Naive thymus-derived CD4-positive, alpha-beta T cell (primary cell): ENCODE measurements at regions of chr20 and their contacts with region 1.

Region 1: DNA sequence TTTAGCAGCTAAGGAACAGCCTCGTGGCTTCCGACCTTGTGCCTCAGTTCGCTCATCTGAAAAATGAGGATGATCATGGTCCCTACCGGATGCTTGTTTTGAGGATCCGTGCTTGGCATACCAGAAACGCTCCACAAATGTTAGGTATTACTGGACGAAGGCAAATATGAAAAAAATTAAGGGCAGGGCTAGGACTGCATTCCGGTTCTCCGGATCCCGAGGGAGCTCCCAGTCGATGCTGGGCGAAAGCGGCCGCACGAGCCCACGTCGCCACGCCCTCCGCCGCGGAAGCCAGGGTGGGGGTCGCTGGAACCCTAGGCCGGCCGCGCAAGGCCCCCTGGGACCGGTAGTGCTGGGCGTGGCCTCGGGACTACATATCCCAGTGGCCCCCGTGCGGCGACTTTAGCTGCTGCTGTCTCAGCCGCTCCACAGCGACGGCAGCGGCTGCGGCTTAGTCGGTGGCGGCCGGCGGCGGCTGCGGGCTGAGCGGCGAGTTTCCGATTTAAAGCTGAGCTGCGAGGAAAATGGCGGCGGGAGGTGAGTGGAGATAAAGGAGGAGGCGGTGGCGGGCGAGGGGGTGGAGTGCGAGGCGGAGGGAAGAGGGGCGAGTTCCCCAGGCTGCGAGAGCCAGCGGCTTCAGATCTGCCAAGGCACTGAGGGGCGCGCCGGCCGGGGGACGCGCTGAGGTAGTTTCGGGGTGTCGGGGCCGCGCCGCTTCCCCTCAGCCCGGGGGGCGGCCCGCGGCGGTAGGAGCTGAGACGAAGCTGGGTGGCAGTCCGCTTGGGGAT is at the start of gene NCOA3:
- DNase-seq: peak; percentile 74 to 94 (median 83)
- ATAC-seq: peak; percentile 95
- H3K4me3 ChIP-seq: peak within 1 kb of the TSS; percentile 86
- H3K4me3 Mint-ChIP-seq: peak within 1 kb of the TSS; percentile 80 to 99 (median 97)
- H3K27ac ChIP-seq: peak within 1 kb of the TSS; percentile 80
- H3K27ac Mint-ChIP-seq: peak within 1 kb of the TSS; percentile 80 to 98 (median 95)
- H3K4me1 ChIP-seq: peaks cover 19 to 28% of the 10 kb centered on the region in 2 donors
- H3K4me1 Mint-ChIP-seq: peaks cover 25 to 48% (median 43%) of the 10 kb centered on the region in 7 donors
- H3K27me3 ChIP-seq: no peaks in the 10 kb centered on the region
- H3K27me3 Mint-ChIP-seq: peaks cover 0 to 2% (median 0%) of the 10 kb centered on the region in 5 donors
- total RNA-seq, gene NCOA3: 75.0 to 115 (median 89.2) TPM

Region 2: DNA sequence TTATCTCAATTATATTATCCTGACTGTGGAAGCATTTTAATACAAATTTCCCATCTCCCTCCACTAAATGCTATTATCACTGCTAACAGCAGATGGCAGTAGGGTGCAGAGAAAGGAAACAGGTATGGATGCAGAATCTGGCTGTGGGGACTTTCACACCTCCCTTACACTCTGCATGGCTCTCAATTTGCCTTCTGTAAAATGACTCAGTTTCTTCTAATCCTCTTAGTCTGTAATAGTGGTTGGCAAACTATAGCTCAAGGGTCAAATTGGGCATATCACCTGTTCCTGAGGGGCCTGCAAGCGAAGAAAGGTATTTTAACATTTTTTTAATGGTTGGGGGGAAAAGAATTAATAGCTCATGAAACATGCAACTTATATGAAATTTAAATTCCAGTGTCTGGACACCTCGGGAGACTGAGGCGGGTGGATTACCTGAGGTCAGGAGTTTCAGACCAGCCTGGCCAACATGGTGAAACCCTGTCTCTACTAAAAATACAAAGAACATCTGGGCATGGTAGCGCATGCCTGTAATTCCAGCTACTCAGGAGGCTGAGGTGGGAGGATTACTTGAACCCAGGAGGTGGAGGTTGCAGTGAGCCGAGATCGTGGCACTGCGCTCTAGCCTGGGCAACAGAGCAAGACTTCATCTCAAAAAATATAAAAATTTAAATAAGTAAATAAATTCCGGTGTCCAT is 228.6 kb before region 1 on chr20:
- CTCF ChIA-PET with region 1: no interaction called
- POLR2A ChIA-PET with region 1: interaction called, 3 read pairs
- intact Hi-C with region 1: loop called (anchors 5 kb)
- DNase-seq: peak in 8 of 9 donors; percentile 32 to 72 (median 56)
- ATAC-seq: peak; percentile 91
- H3K4me3 ChIP-seq: no peak overlapping the region
- H3K4me3 Mint-ChIP-seq: peak overlapping the region in 1 of 10 donors; percentile 35
- H3K27ac ChIP-seq: no peak overlapping the region
- H3K27ac Mint-ChIP-seq: peak overlapping the region in 6 of 9 donors; percentile 4 to 94 (median 59)
- H3K4me1 ChIP-seq: peaks cover 0 to 2% of the 10 kb centered on the region in 2 donors
- H3K4me1 Mint-ChIP-seq: peaks cover 0 to 43% (median 13%) of the 10 kb centered on the region in 7 donors
- H3K27me3 ChIP-seq: no peaks in the 10 kb centered on the region
- H3K27me3 Mint-ChIP-seq: no peaks in the 10 kb centered on the region

Region 3: GRCh38 chr20:47411161-47411560 is 90.5 kb before region 1 on chr20:
- CTCF ChIA-PET with region 1: interaction called, 3 read pairs
- POLR2A ChIA-PET with region 1: interaction called, 6 read pairs
- intact Hi-C with region 1: loop called (anchors 1 to 10 kb)
- DNase-seq: no peak
- ATAC-seq: no peak
- H3K4me3 ChIP-seq: no peak overlapping the region
- H3K4me3 Mint-ChIP-seq: peak overlapping the region in 1 of 10 donors; percentile 20
- H3K27ac ChIP-seq: no peak overlapping the region
- H3K27ac Mint-ChIP-seq: no peak overlapping the region
- H3K4me1 ChIP-seq: peaks cover 13 to 15% of the 10 kb centered on the region in 2 donors
- H3K4me1 Mint-ChIP-seq: peaks cover 10 to 26% (median 25%) of the 10 kb centered on the region in 7 donors
- H3K27me3 ChIP-seq: no peaks in the 10 kb centered on the region
- H3K27me3 Mint-ChIP-seq: no peaks in the 10 kb centered on the region

Region 4: GRCh38 chr20:47468290-47469050 is 33.2 kb before region 1 on chr20:
- CTCF ChIA-PET with region 1: no interaction called
- POLR2A ChIA-PET with region 1: no interaction called
- intact Hi-C with region 1: loop called in 1 of 2 experiments (anchors 1 kb)
- DNase-seq: no peak
- ATAC-seq: peak; percentile 32
- H3K4me3 ChIP-seq: no peak overlapping the region
- H3K4me3 Mint-ChIP-seq: no peak overlapping the region
- H3K27ac ChIP-seq: no peak overlapping the region
- H3K27ac Mint-ChIP-seq: no peak overlapping the region
- H3K4me1 ChIP-seq: no peaks in the 10 kb centered on the region
- H3K4me1 Mint-ChIP-seq: peaks cover 0 to 28% (median 3%) of the 10 kb centered on the region in 7 donors
- H3K27me3 ChIP-seq: no peaks in the 10 kb centered on the region
- H3K27me3 Mint-ChIP-seq: no peaks in the 10 kb centered on the region

Region 5: DNA sequence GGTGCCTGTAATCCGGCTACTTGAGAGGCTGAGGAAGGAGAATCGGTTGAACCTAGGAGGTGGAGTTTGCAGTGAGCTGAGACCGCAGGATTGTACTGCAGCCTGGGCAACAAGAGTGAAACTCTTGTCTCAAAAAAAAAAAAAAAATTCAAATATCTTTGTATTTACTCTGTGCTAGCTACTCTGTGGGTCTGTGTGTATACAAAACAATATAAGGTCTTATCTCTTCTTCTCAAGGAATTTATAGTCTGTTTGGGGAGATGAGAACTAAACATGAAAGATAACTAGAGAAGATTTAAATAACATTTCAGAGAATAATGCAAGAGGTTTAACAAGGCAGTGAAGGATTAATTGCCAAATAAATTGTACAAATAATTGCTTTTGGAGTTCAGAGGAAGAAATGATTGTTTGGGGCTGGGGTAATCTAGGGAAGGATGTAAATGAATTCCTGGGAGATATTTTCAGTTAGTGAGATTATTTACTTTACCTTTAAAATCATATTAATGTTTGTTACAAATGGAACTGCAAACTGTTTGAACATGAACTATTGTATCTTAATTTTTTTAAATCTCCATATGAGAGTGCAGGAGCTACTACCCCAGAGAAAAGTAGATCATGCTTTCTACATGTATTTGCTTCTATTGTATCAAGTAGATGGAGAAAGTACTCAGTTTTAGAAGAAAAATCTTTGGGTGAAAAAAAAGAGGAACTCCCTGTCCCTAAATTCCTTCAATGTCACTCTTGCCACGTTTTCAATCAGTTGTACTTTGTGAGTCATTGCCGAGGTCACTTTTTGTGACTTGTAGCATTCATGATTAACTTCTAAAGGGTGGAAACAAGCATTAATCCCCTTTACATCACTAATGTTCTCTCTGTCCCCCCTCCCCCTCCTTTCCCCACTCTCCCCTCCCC is 39.0 kb after region 1 on chr20:
- CTCF ChIA-PET with region 1: no interaction called
- POLR2A ChIA-PET with region 1: interaction called, 5 read pairs
- intact Hi-C with region 1: loop called in 1 of 2 experiments (anchors 5 kb)
- DNase-seq: no peak
- ATAC-seq: peak; percentile 47
- H3K4me3 ChIP-seq: no peak overlapping the region
- H3K4me3 Mint-ChIP-seq: peak overlapping the region in 7 of 10 donors; percentile 0 to 60 (median 39)
- H3K27ac ChIP-seq: no peak overlapping the region
- H3K27ac Mint-ChIP-seq: peak overlapping the region in 8 of 9 donors; percentile 8 to 62 (median 22)
- H3K4me1 ChIP-seq: peaks cover 0 to 10% of the 10 kb centered on the region in 2 donors
- H3K4me1 Mint-ChIP-seq: peaks cover 55 to 92% (median 77%) of the 10 kb centered on the region in 7 donors
- H3K27me3 ChIP-seq: no peaks in the 10 kb centered on the region
- H3K27me3 Mint-ChIP-seq: no peaks in the 10 kb centered on the region

Region 6: DNA sequence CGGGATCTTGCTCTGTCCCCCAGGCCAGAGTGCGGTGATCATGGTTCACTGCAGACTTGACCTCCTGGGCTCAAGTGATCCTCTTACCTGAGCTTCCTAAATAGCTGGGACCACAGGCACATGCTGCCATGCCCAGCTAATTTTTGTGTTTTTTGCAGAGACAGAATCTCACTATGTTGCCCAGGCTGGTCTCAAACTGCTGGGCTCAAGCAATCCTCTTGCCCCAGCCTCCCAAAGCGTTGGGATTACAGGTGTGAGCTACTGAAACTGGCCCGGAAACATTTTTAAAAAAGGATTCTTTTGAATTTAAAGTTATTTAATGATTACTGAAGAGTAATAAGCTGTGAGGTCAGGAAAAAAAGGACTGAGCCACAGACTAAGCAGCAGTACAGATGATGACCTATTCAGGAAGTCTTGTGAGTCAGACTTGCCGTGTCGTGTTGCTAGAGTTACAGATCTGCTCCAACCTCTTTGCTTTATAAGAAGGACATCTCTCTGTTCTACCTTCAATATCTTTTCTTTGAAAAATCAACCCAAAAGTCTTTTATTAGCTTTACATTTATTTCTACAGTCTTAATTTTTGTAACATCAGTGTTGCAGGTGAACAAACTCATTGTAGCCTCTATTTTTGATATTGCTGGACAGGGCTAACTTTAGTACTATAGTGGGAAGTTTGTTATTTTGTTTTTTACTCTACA is 108.7 kb after region 1 on chr20:
- CTCF ChIA-PET with region 1: no interaction called
- POLR2A ChIA-PET with region 1: no interaction called
- intact Hi-C with region 1: loop called (anchors 2 to 5 kb)
- DNase-seq: peak in 4 of 9 donors; percentile 5 to 68 (median 32)
- ATAC-seq: peak; percentile 89
- H3K4me3 ChIP-seq: no peak overlapping the region
- H3K4me3 Mint-ChIP-seq: peak overlapping the region in 8 of 10 donors; percentile 1 to 83 (median 39)
- H3K27ac ChIP-seq: peak overlapping the region; percentile 17
- H3K27ac Mint-ChIP-seq: peak overlapping the region; percentile 65 to 96 (median 86)
- H3K4me1 ChIP-seq: peaks cover 26 to 38% of the 10 kb centered on the region in 2 donors
- H3K4me1 Mint-ChIP-seq: peaks cover 40 to 83% (median 77%) of the 10 kb centered on the region in 7 donors
- H3K27me3 ChIP-seq: no peaks in the 10 kb centered on the region
- H3K27me3 Mint-ChIP-seq: no peaks in the 10 kb centered on the region

Region 7: GRCh38 chr20:49186535-49187329 is 1685.1 kb after region 1 on chr20:
- CTCF ChIA-PET with region 1: no interaction called
- POLR2A ChIA-PET with region 1: no interaction called
- intact Hi-C with region 1: loop called in 1 of 2 experiments (anchors 5 kb)
- DNase-seq: peak; percentile 17 to 85 (median 73)
- ATAC-seq: peak; percentile 33
- H3K4me3 ChIP-seq: peak overlapping the region; percentile 88
- H3K4me3 Mint-ChIP-seq: peak overlapping the region; percentile 88 to 100 (median 94)
- H3K27ac ChIP-seq: peak overlapping the region; percentile 97
- H3K27ac Mint-ChIP-seq: peak overlapping the region; percentile 70 to 96 (median 93)
- H3K4me1 ChIP-seq: peaks cover 18% of the 10 kb centered on the region in 2 donors
- H3K4me1 Mint-ChIP-seq: peaks cover 38 to 56% (median 50%) of the 10 kb centered on the region in 7 donors
- H3K27me3 ChIP-seq: no peaks in the 10 kb centered on the region
- H3K27me3 Mint-ChIP-seq: peaks cover 0 to 7% (median 0%) of the 10 kb centered on the region in 5 donors